SK-N-SH (cell line): ENCODE measurements at regions of chr6 and their contacts with region 1.

Region 1: GRCh38 chr6:116444092-116444491 is 17.1 kb upstream of the CALHM6 start:
- DNase-seq: peak; percentile 36
- H3K4me3 ChIP-seq: no peak overlapping the region
- H3K27ac ChIP-seq: no peak overlapping the region
- H3K4me1 ChIP-seq: peaks cover 0 to 11% of the 10 kb centered on the region in 2 experiments; a peak in 3 of 4 replicates
- H3K27me3 ChIP-seq: no peaks in the 10 kb centered on the region
- CTCF ChIP-seq: peak; percentile 65
- EP300 ChIP-seq: no peak
- RAD21 ChIP-seq: peak; percentile 56

Region 2: DNA sequence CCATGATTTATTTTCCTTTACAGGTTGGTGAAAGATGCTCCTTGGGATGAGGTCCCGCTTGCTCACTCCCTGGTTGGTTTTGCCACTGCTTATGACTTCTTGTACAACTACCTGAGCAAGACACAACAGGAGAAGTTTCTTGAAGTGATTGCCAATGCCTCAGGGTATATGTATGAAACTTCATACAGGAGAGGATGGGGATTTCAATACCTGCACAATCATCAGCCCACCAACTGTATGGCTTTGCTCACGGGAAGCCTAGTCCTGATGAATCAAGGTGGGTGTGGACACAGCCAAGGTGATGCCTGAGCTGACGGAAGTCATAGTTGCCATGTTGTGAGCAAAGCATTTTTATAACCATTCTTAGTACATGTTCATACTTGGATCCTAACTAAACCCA is 17.5 kb before region 1 on chr6:
- CTCF ChIA-PET with region 1: interaction called, 10 read pairs
- POLR2A ChIA-PET with region 1: no interaction called
- DNase-seq: no peak
- H3K4me3 ChIP-seq: no peak overlapping the region
- H3K27ac ChIP-seq: no peak overlapping the region
- H3K4me1 ChIP-seq: no peaks in the 10 kb centered on the region
- H3K27me3 ChIP-seq: no peaks in the 10 kb centered on the region
- CTCF ChIP-seq: no peak
- EP300 ChIP-seq: no peak
- RAD21 ChIP-seq: no peak

Region 3: DNA sequence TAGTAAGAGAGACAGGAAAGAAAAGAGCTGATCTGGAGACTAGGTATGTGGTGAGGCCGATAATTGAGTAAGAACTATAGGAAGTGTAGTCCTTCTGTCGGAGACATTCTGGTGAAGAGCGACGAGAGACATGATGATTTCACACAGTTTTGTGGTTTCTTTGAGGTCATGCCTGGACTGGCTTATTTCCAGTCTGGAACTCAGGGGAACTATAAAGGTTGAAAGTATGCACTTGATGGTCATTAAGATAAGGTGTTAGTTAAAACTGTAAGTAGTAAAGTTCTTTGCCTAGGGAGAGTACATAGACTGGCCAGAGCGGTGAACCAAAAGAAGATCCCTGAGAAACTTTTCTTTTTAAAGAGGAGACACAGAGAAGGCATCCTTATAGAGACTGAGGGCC is 501.7 kb after region 1 on chr6:
- CTCF ChIA-PET with region 1: no interaction called
- POLR2A ChIA-PET with region 1: no interaction called
- DNase-seq: no peak
- H3K4me3 ChIP-seq: no peak overlapping the region
- H3K27ac ChIP-seq: no peak overlapping the region
- H3K4me1 ChIP-seq: no peaks in the 10 kb centered on the region
- H3K27me3 ChIP-seq: no peaks in the 10 kb centered on the region
- CTCF ChIP-seq: no peak
- EP300 ChIP-seq: no peak
- RAD21 ChIP-seq: no peak